Activated B cell treated with CpG ODN at 0.5 μM for 24 hours (primary cell): ENCODE measurements at regions of chr3 and their contacts with region 1.

Region 1: DNA sequence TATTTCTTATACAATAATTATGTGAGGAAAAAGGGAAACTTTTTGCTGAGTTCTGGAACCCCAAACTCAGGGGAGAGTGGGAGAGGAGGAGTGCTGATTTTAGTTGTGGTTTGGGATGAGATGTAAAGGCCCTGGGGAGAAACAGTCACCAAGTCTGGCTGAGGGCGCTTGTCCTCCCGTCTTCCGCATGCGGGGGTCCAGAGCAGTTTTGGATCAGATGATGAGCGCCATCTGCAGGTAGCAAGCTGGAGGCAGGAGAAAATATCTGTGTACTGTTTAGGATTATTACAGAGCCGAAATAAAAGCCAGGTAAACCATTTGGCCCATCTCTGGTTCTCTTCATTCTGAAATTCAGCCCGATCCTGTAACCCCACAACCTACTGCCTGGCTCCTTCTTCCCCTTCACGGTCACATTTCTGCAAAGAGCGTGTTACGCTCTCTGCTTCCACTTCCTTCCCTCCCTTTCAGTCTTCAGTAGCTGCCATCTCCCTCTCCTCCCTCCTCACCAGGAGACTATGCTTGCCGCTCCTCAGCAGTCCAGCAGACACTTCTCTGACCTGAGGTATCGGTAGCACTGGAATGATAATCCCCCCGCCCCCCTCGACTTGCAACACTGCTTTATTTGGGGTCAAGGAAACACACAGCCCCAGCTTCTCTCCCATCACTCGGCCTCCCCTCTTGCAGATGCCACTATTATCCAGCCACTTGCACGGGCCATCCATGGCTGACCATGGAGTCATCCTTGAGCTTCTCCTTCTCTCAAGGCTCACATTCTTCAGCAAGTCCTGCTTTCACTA is 1.4 kb upstream of the PARP14 start:
- DNase-seq: peak; percentile 52
- ATAC-seq: peak; percentile 45
- H3K4me3 Mint-ChIP-seq: peak overlapping the region; percentile 90
- H3K27ac Mint-ChIP-seq: peak overlapping the region; percentile 87
- H3K4me1 Mint-ChIP-seq: peaks cover 63% of the 10 kb centered on the region
- H3K27me3 Mint-ChIP-seq: no peaks in the 10 kb centered on the region
- CTCF ChIP-seq: no peak

Region 2: GRCh38 chr3:122458992-122459391 is 220.3 kb before region 1 on chr3:
- CTCF ChIA-PET with region 1: interaction called, 13 read pairs
- POLR2A ChIA-PET with region 1: no interaction called
- intact Hi-C with region 1: loop called (anchors 5 kb)
- DNase-seq: no peak
- ATAC-seq: no peak
- H3K4me3 Mint-ChIP-seq: no peak overlapping the region
- H3K27ac Mint-ChIP-seq: no peak overlapping the region
- H3K4me1 Mint-ChIP-seq: peaks cover 10% of the 10 kb centered on the region
- H3K27me3 Mint-ChIP-seq: no peaks in the 10 kb centered on the region
- CTCF ChIP-seq: no peak

Region 3: GRCh38 chr3:122564155-122564912 is 114.9 kb before region 1 on chr3 and contains the starts of genes DTX3L and PARP9:
- CTCF ChIA-PET with region 1: interaction called, 92 read pairs
- POLR2A ChIA-PET with region 1: interaction called, 89 read pairs
- intact Hi-C with region 1: loop called (anchors 1 kb)
- DNase-seq: peak; percentile 67
- ATAC-seq: peak; percentile 83
- H3K4me3 Mint-ChIP-seq: peak within 1 kb of the TSS; percentile 93
- H3K27ac Mint-ChIP-seq: peak within 1 kb of the TSS; percentile 96
- H3K4me1 Mint-ChIP-seq: peaks cover 82% of the 10 kb centered on the region
- H3K27me3 Mint-ChIP-seq: no peaks in the 10 kb centered on the region
- CTCF ChIP-seq: no peak
- total RNA-seq, gene DTX3L: 73.8 and 76.5 TPM in 2 replicates
- total RNA-seq, gene PARP9: 45.9 and 50.8 TPM in 2 replicates

Region 4: DNA sequence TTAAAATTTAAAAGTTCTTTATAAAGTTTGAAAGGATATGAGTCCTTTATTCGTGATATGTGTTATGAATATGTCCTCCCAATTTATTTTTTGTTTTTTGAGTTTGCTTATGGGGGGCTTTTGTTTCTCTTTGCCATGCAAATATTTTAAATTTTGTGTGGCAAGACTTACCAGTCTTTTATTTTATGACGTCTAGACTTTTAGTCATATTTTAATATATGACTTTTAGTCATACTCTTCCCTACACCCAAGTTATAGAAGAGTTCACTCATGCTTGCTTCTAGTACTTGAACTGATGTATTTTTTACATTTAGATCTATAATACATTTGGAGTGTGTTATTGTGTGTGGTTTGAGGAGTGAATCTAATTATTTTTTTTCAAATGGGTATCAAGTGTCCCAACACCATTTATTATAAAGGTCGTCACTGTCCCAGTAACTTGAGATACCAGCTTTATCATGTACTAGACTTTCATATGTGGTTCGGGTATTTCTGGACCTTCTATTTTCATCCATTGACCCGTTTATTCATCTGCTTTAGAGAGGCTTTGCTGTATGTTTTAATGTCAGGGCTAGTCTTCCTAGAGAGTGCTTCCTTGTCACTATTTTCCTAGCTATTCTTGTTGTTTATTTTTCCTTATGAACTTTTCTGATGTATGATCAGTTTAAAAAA is 101.1 kb before region 1 on chr3:
- CTCF ChIA-PET with region 1: interaction called, 10 read pairs
- POLR2A ChIA-PET with region 1: interaction called, 81 read pairs
- intact Hi-C with region 1: loop called (anchors 1 kb)
- DNase-seq: no peak
- ATAC-seq: no peak
- H3K4me3 Mint-ChIP-seq: peak overlapping the region; percentile 100
- H3K27ac Mint-ChIP-seq: peak overlapping the region; percentile 100
- H3K4me1 Mint-ChIP-seq: peaks cover 82% of the 10 kb centered on the region
- H3K27me3 Mint-ChIP-seq: no peaks in the 10 kb centered on the region
- CTCF ChIP-seq: no peak

Region 5: GRCh38 chr3:122621112-122621511 is 58.2 kb before region 1 on chr3:
- CTCF ChIA-PET with region 1: interaction called, 36 read pairs
- POLR2A ChIA-PET with region 1: interaction called, 16 read pairs
- intact Hi-C with region 1: loop called (anchors 2 kb)
- DNase-seq: no peak
- ATAC-seq: peak; percentile 38
- H3K4me3 Mint-ChIP-seq: peak overlapping the region; percentile 56
- H3K27ac Mint-ChIP-seq: peak overlapping the region; percentile 85
- H3K4me1 Mint-ChIP-seq: peaks cover 73% of the 10 kb centered on the region
- H3K27me3 Mint-ChIP-seq: no peaks in the 10 kb centered on the region
- CTCF ChIP-seq: no peak

Region 6: GRCh38 chr3:122697952-122698620 is 18.8 kb after region 1 on chr3:
- CTCF ChIA-PET with region 1: interaction called, 45 read pairs
- POLR2A ChIA-PET with region 1: interaction called, 126 read pairs
- intact Hi-C with region 1: loop called (anchors 1 kb)
- DNase-seq: peak; percentile 48
- ATAC-seq: peak; percentile 95
- H3K4me3 Mint-ChIP-seq: peak overlapping the region; percentile 52
- H3K27ac Mint-ChIP-seq: peak overlapping the region; percentile 92
- H3K4me1 Mint-ChIP-seq: peaks cover 94% of the 10 kb centered on the region
- H3K27me3 Mint-ChIP-seq: no peaks in the 10 kb centered on the region
- CTCF ChIP-seq: no peak

Region 7: GRCh38 chr3:123028233-123028828 is 349.0 kb after region 1 on chr3:
- CTCF ChIA-PET with region 1: interaction called, 3 read pairs
- POLR2A ChIA-PET with region 1: no interaction called
- intact Hi-C with region 1: loop called (anchors 1 kb)
- DNase-seq: peak; percentile 19
- ATAC-seq: peak; percentile 50
- H3K4me3 Mint-ChIP-seq: peak overlapping the region; percentile 83
- H3K27ac Mint-ChIP-seq: no peak overlapping the region
- H3K4me1 Mint-ChIP-seq: peaks cover 19% of the 10 kb centered on the region
- H3K27me3 Mint-ChIP-seq: peaks cover 37% of the 10 kb centered on the region
- CTCF ChIP-seq: no peak